PC-3 (cell line): ENCODE measurements at regions of chr10 and their contacts with region 1.

Region 1: GRCh38 chr10:33715303-33715975 is 381.0 kb upstream of the NRP1 start:
- DNase-seq: no peak
- ATAC-seq: no peak
- H3K4me3 ChIP-seq: no peak overlapping the region
- H3K27ac ChIP-seq: no peak overlapping the region
- H3K4me1 ChIP-seq: no peaks in the 10 kb centered on the region
- H3K27me3 ChIP-seq: no peaks in the 10 kb centered on the region
- CTCF ChIP-seq: no peak

Region 2: DNA sequence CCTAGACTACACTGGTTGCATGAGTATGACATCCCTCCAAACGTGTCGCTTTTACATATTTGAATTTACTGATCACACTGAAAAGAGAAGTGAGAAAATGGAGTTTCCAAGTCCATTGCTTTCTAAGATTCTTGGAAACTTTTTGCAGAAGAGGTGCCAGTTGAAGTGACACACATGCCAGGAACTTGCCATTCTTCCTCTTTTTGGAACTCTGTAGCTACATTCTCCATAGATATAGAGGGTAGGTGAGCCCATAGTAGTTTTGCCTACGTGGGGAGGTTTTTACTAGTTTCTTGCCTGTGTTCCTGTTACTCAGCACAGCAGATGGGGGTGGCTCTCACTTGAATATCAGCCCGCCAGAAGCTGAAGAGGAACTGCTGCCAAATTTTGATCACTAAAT is 94.3 kb before region 1 on chr10:
- CTCF ChIA-PET with region 1: no interaction called
- POLR2A ChIA-PET with region 1: no interaction called
- intact Hi-C with region 1: no loop called
- DNase-seq: no peak
- ATAC-seq: no peak
- H3K4me3 ChIP-seq: no peak overlapping the region
- H3K27ac ChIP-seq: no peak overlapping the region
- H3K4me1 ChIP-seq: no peaks in the 10 kb centered on the region
- H3K27me3 ChIP-seq: no peaks in the 10 kb centered on the region
- CTCF ChIP-seq: no peak

Region 3: GRCh38 chr10:34031400-34031799 is 316.0 kb after region 1 on chr10:
- CTCF ChIA-PET with region 1: interaction called, 10 read pairs
- POLR2A ChIA-PET with region 1: no interaction called
- intact Hi-C with region 1: no loop called
- DNase-seq: peak; percentile 95
- ATAC-seq: peak; percentile 94
- H3K4me3 ChIP-seq: no peak overlapping the region
- H3K27ac ChIP-seq: 0 out of 2 replicates have a peak overlapping the region, but pooled peaks have one; percentile 1
- H3K4me1 ChIP-seq: peaks cover 11% of the 10 kb centered on the region
- H3K27me3 ChIP-seq: no peaks in the 10 kb centered on the region
- CTCF ChIP-seq: no peak